ENCODE measurements at regions of chr6 and their contacts with region 1.

Region 1: GRCh38 chr6:41072676-41073623 is at the start of gene NFYA:
- DNase-seq: peak; percentile 100
- ATAC-seq: peak; percentile 75
- H3K4me3 Mint-ChIP-seq: peak within 1 kb of the TSS; percentile 94
- H3K27ac Mint-ChIP-seq: peak within 1 kb of the TSS; percentile 98
- H3K4me1 Mint-ChIP-seq: peaks cover 48% of the 10 kb centered on the region
- H3K27me3 Mint-ChIP-seq: no peaks in the 10 kb centered on the region
- total RNA-seq, gene NFYA: 31.5 to 38.2 TPM

Region 2: DNA sequence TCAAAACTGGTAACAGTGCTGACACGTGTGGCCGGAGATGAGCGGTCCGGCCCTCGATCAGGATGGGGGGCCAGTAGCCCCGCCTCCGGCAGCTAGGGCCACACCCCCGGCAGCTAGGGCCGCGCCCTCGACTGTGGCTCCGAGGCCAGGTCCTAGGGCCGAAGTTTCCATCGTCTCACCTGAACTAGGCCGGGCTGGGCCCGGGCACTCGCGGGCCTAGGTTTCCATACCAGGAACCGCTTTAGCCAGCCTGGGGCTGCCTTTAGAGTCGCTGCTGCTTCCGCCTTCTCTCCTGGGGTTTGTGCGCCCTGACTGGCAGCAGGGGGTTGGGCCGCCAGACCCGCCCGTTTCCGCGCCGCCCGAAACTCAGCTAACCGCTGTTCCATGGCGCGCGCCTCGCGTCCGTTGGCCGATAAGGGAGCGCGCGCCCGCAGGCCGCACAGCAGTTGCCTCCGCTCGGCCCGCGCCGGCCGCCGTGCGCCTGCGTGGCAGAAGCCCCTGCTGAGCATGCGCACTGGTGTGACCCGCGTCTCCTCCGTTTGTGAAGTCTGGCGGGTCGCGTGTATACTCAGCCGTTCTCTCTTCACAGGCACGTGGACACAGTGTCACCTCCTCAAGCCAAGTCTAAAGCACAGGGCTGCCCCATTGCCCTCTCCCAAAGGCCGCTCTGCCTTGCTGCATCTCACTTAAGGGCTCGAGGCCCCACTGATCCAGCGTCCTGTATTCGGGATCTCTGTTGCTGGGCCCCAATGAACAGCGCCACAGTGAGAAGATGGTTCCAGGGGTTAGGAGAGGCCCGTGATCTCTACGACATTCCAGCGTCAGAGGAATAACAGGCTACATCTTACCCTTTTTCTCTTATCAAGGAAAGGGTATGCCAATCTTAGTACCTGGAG is 1958.0 kb before region 1 on chr6 and contains the start of gene SAYSD1:
- CTCF ChIA-PET with region 1: no interaction called
- POLR2A ChIA-PET with region 1: no interaction called
- intact Hi-C with region 1: loop called in 1 of 2 experiments (anchors 1 kb)
- DNase-seq: peak; percentile 96
- ATAC-seq: peak; percentile 77
- H3K4me3 Mint-ChIP-seq: peak within 1 kb of the TSS; percentile 85
- H3K27ac Mint-ChIP-seq: peak within 1 kb of the TSS; percentile 98
- H3K4me1 Mint-ChIP-seq: peaks cover 63% of the 10 kb centered on the region
- H3K27me3 Mint-ChIP-seq: no peaks in the 10 kb centered on the region
- total RNA-seq, gene SAYSD1: 14.1 to 16.7 TPM

Region 3: GRCh38 chr6:41027799-41028628 is 44.9 kb before region 1 on chr6:
- CTCF ChIA-PET with region 1: interaction called, 13 read pairs
- POLR2A ChIA-PET with region 1: interaction called, 4 read pairs
- intact Hi-C with region 1: loop called in 1 of 2 experiments (anchors 1 kb)
- DNase-seq: peak; percentile 89
- ATAC-seq: peak; percentile 88
- H3K4me3 Mint-ChIP-seq: peak overlapping the region; percentile 73
- H3K27ac Mint-ChIP-seq: peak overlapping the region; percentile 77
- H3K4me1 Mint-ChIP-seq: peaks cover 17% of the 10 kb centered on the region
- H3K27me3 Mint-ChIP-seq: no peaks in the 10 kb centered on the region

Region 4: GRCh38 chr6:41298785-41299502 is 226.0 kb after region 1 on chr6:
- CTCF ChIA-PET with region 1: no interaction called
- POLR2A ChIA-PET with region 1: no interaction called
- intact Hi-C with region 1: loop called in 1 of 2 experiments (anchors 5 kb)
- DNase-seq: no peak
- ATAC-seq: peak; percentile 83
- H3K4me3 Mint-ChIP-seq: peak overlapping the region; percentile 24
- H3K27ac Mint-ChIP-seq: peak overlapping the region; percentile 84
- H3K4me1 Mint-ChIP-seq: peaks cover 57% of the 10 kb centered on the region
- H3K27me3 Mint-ChIP-seq: peaks cover 3% of the 10 kb centered on the region

Region 5: DNA sequence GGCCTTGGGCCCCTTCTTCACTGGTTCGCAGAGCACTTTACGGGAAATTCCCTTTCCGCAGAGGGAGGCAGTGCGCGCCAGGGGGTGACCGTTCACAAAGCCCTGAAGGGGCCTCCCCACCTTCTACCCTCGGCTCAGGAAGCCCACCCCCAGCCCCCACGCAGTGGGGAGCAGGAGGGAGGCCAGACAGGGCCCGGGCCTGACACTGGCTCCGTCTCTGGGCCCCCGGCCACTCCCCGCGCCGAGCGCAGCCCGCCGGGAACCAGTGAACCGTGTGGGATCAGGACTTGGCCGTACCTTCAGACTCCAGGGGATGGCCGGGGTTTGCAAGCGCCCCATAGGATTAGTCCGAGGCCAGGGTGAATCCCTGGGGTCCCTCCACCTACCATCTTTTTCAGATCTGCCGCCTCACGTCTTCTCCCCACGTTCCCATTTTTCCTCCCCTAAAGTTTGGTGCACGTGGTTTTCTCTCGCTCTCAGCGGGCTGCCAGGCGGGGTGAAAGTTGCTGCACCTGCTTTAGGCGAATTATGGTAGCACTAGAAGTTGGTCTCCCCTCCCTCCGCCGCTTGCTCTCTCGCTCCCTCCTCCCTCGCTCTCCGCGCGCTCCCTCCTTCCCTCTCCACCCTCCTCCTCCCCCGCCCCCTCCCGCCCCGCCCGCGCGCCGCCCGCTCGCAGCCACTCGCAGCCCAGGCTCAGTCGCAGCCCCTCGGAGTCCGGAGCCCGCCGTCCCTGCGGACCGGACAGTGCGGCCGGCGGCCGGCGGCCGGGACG is 472.9 kb after region 1 on chr6 and contains the start of gene FOXP4:
- CTCF ChIA-PET with region 1: no interaction called
- POLR2A ChIA-PET with region 1: no interaction called
- intact Hi-C with region 1: loop called in 1 of 2 experiments (anchors 1 kb)
- DNase-seq: peak; percentile 92
- ATAC-seq: peak; percentile 84
- H3K4me3 Mint-ChIP-seq: peak within 1 kb of the TSS; percentile 84
- H3K27ac Mint-ChIP-seq: peak within 1 kb of the TSS; percentile 92
- H3K4me1 Mint-ChIP-seq: peaks cover 15% of the 10 kb centered on the region
- H3K27me3 Mint-ChIP-seq: peaks cover 6% of the 10 kb centered on the region
- total RNA-seq, gene FOXP4: 11.1 to 13.8 TPM

Region 6: GRCh38 chr6:41920921-41921711 is 848.2 kb after region 1 on chr6 and contains the starts of genes BYSL and MED20:
- CTCF ChIA-PET with region 1: no interaction called
- POLR2A ChIA-PET with region 1: no interaction called
- intact Hi-C with region 1: loop called in 1 of 2 experiments (anchors 1 kb)
- DNase-seq: peak; percentile 96
- ATAC-seq: peak; percentile 83
- H3K4me3 Mint-ChIP-seq: peak within 1 kb of the TSS; percentile 99
- H3K27ac Mint-ChIP-seq: peak within 1 kb of the TSS; percentile 98
- H3K4me1 Mint-ChIP-seq: peaks cover 49% of the 10 kb centered on the region
- H3K27me3 Mint-ChIP-seq: no peaks in the 10 kb centered on the region
- total RNA-seq, gene BYSL: 51.6 to 56.0 TPM
- total RNA-seq, gene MED20: 19.4 to 21.6 TPM

Region 7: DNA sequence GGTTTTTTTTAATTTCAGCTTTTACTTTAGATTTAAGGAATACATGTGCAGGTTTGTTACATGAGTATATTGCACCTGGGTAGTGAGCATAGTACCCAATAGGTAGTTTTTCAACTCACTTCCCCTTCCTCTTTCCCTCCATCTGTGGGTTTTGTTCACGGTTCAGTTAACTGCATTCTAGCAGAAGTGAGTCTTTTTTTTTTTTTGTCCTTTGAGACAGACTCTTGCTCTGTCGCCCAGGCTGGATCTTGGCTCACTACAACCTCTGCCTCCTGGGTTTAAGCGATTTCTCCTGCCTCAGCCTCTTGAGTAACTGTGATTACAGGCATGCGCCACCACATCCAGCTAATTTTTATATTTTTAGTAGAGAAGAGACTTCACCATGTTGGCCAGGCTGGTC is 1499.6 kb after region 1 on chr6:
- CTCF ChIA-PET with region 1: no interaction called
- POLR2A ChIA-PET with region 1: no interaction called
- intact Hi-C with region 1: no loop called
- DNase-seq: no peak
- ATAC-seq: no peak
- H3K4me3 Mint-ChIP-seq: no peak overlapping the region
- H3K27ac Mint-ChIP-seq: peak overlapping the region; percentile 53
- H3K4me1 Mint-ChIP-seq: peaks cover 47% of the 10 kb centered on the region
- H3K27me3 Mint-ChIP-seq: no peaks in the 10 kb centered on the region